ENCODE measurements at regions of chr4 and their contacts with region 1.

Region 1: DNA sequence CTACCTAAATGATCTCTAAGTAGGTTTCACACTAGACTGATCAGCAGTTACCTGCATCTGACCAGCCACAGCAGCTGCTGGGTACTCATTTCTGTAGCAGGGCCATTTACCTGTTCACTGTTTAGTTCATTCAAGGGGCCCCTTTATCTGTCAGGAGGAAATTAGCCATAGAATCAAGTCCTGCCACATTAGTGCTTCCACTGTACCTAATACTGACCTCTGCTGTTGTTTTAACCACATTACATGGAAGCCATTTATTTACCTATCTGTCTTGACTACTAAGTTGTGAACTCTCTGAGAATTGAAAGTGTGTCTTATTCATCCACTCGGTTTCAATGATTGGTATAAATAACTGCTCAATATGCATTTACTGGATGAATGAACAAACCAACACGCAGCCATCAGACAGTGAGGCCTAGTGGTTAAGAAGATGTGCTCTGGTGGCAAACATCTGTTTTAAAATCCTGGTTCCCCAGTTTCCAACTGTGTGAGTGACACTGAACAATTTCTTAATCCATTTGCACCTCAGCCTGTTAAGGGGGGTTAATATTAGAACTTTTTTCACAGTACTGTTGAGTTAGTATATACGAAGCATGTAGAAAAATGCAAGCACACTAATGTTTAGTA is 30.0 kb upstream of the ANXA5 start:
- DNase-seq: peak; percentile 66
- H3K4me3 ChIP-seq: no peak overlapping the region
- CTCF ChIP-seq: peak; percentile 57

Region 2: DNA sequence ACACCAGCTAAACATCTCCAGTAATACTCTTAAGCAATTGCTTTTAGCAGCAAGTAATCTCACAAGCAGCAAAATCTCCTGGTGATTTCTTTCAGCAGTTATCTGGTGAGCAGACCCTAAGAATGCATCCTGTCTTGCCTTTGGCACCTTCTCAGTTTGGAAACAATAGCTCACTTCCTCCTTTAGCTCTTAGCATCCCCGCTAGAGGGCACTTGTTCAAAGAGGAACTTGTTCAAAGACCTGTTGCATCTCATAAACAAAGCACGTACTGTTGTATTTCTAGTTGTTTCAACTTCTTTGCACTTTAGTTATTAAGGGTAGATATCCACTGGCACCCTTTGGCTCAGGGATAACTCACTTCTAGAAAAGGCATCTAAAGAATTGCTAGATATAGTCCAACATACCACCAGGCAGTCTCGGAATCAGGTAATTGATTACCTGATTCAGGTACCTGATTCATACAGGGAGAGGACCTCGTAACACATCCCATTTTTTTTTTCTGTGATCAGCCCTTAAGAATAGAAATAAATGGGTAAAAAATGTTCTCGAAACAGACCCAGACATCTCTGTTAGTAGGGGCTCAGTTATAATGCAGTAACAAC is 264.0 kb before region 1 on chr4:
- in situ Hi-C with region 1: loop called (anchors 25 kb)
- DNase-seq: peak; percentile 66
- H3K4me3 ChIP-seq: no peak overlapping the region
- CTCF ChIP-seq: peak; percentile 87